Uterus (tissue), 4 donors: ENCODE measurements at regions of chr1 and their contacts with region 1.

Region 1: GRCh38 chr1:226633541-226634165 is 85.1 kb downstream of the STUM start:
- DNase-seq: no peak
- H3K4me3 ChIP-seq: no peak overlapping the region
- H3K27ac ChIP-seq: peak overlapping the region; percentile 52 to 78
- H3K4me1 ChIP-seq: peaks cover 0 to 10% of the 10 kb centered on the region in 2 donors
- H3K27me3 ChIP-seq: no peaks in the 10 kb centered on the region
- CTCF ChIP-seq: no peak
- POLR2A ChIP-seq: no peak

Region 2: GRCh38 chr1:226827968-226828513 is 194.4 kb after region 1 on chr1:
- intact Hi-C with region 1: loop called (anchors 2 kb)
- DNase-seq: peak; percentile 97
- H3K4me3 ChIP-seq: peak overlapping the region; percentile 0 to 13
- H3K27ac ChIP-seq: peak overlapping the region; percentile 89 to 96
- H3K4me1 ChIP-seq: peaks cover 0 to 6% of the 10 kb centered on the region in 2 donors
- H3K27me3 ChIP-seq: no peaks in the 10 kb centered on the region
- CTCF ChIP-seq: peak; percentile 95 to 98 (median 96)
- POLR2A ChIP-seq: peak in 1 of 2 donors; percentile 4